Naive thymus-derived CD4-positive, alpha-beta T cell (primary cell): ENCODE measurements at regions of chr19 and their contacts with region 1.

Region 1: GRCh38 chr19:41859618-41860418 is at the start of gene RPS19:
- DNase-seq: peak; percentile 95 to 99 (median 98)
- ATAC-seq: peak; percentile 92
- H3K4me3 ChIP-seq: peak within 1 kb of the TSS; percentile 90
- H3K4me3 Mint-ChIP-seq: peak within 1 kb of the TSS; percentile 86 to 95 (median 93)
- H3K27ac ChIP-seq: peak within 1 kb of the TSS; percentile 89
- H3K27ac Mint-ChIP-seq: peak within 1 kb of the TSS; percentile 91 to 98 (median 95)
- H3K4me1 ChIP-seq: peaks cover 39 to 43% of the 10 kb centered on the region in 2 donors
- H3K4me1 Mint-ChIP-seq: peaks cover 34 to 47% (median 41%) of the 10 kb centered on the region in 7 donors
- H3K27me3 ChIP-seq: no peaks in the 10 kb centered on the region
- H3K27me3 Mint-ChIP-seq: peaks cover 0 to 9% (median 0%) of the 10 kb centered on the region in 5 donors
- total RNA-seq, gene RPS19: 2,739 to 3,712 (median 3,396) TPM

Region 2: GRCh38 chr19:41872775-41873647 is 13.2 kb after region 1 on chr19:
- CTCF ChIA-PET with region 1: interaction called, 38 read pairs
- POLR2A ChIA-PET with region 1: interaction called, 98 read pairs
- intact Hi-C with region 1: loop called (anchors 1 kb)
- DNase-seq: peak; percentile 58 to 72 (median 65)
- ATAC-seq: peak; percentile 20
- H3K4me3 ChIP-seq: no peak overlapping the region
- H3K4me3 Mint-ChIP-seq: peak overlapping the region; percentile 1 to 93 (median 67)
- H3K27ac ChIP-seq: peak overlapping the region; percentile 74
- H3K27ac Mint-ChIP-seq: peak overlapping the region; percentile 91 to 99 (median 99)
- H3K4me1 ChIP-seq: peaks cover 82 to 91% of the 10 kb centered on the region in 2 donors
- H3K4me1 Mint-ChIP-seq: peaks cover 45 to 93% (median 79%) of the 10 kb centered on the region in 7 donors
- H3K27me3 ChIP-seq: no peaks in the 10 kb centered on the region
- H3K27me3 Mint-ChIP-seq: no peaks in the 10 kb centered on the region

Region 3: GRCh38 chr19:41928221-41928683 is 68.4 kb after region 1 on chr19 and contains the start of gene ERFL:
- CTCF ChIA-PET with region 1: interaction called, 3 read pairs
- POLR2A ChIA-PET with region 1: interaction called, 7 read pairs
- intact Hi-C with region 1: loop called in 1 of 2 experiments (anchors 1 kb)
- DNase-seq: peak in 2 of 9 donors; percentile 32 to 53
- ATAC-seq: peak; percentile 50
- H3K4me3 ChIP-seq: peak within 1 kb of the TSS; percentile 93
- H3K4me3 Mint-ChIP-seq: peak within 1 kb of the TSS in 6 of 10 donors; percentile 88 to 99 (median 91)
- H3K27ac ChIP-seq: peak within 1 kb of the TSS; percentile 70
- H3K27ac Mint-ChIP-seq: peak within 1 kb of the TSS; percentile 75 to 96 (median 90)
- H3K4me1 ChIP-seq: peaks cover 17 to 18% of the 10 kb centered on the region in 2 donors
- H3K4me1 Mint-ChIP-seq: peaks cover 23 to 41% (median 29%) of the 10 kb centered on the region in 7 donors
- H3K27me3 ChIP-seq: no peaks in the 10 kb centered on the region
- H3K27me3 Mint-ChIP-seq: peaks cover 0 to 9% (median 3%) of the 10 kb centered on the region in 5 donors
- total RNA-seq, gene ERFL: 3.0 to 15.0 (median 8.0) TPM

Region 4: DNA sequence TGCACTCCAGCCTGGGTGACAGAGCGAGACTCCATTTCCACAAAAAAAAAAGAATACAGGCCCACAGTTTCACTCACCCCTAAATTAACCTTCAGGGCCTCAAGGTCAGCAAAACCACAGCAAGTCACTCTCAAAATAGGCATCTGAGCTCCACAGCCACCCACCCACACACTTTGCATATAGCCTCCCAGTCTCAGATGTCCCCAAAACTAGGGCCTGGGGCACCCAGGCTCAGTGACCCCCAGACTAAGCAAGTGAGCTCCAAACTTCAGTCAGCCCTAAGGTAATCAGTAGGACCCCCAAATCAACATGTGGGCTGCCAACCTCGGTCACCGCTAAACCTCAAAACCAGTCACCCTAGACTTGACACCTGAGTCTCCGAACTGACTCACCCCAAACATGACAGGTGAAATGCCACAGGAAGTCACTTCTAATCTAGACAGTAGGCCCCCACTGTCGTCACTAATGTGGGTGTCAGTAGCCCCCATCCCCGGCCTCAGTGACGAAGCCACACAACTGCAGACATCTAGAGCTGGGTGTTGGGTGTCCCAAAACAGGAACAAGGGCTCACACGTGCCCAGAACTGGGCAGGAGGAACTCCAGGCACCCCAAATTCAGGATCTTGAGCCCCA is 85.4 kb after region 1 on chr19:
- CTCF ChIA-PET with region 1: interaction called, 22 read pairs
- POLR2A ChIA-PET with region 1: interaction called, 19 read pairs
- intact Hi-C with region 1: no loop called
- DNase-seq: peak; percentile 45 to 90 (median 82)
- ATAC-seq: peak; percentile 96
- H3K4me3 ChIP-seq: no peak overlapping the region
- H3K4me3 Mint-ChIP-seq: peak overlapping the region in 9 of 10 donors; percentile 39 to 77 (median 60)
- H3K27ac ChIP-seq: peak overlapping the region; percentile 57
- H3K27ac Mint-ChIP-seq: peak overlapping the region; percentile 84 to 100 (median 96)
- H3K4me1 ChIP-seq: peaks cover 23 to 41% of the 10 kb centered on the region in 2 donors
- H3K4me1 Mint-ChIP-seq: peaks cover 27 to 50% (median 41%) of the 10 kb centered on the region in 7 donors
- H3K27me3 ChIP-seq: no peaks in the 10 kb centered on the region
- H3K27me3 Mint-ChIP-seq: peaks cover 0 to 16% (median 4%) of the 10 kb centered on the region in 5 donors

Region 5: GRCh38 chr19:41959056-41960053 is 99.5 kb after region 1 on chr19 and contains the start of gene RABAC1:
- CTCF ChIA-PET with region 1: interaction called, 6 read pairs
- POLR2A ChIA-PET with region 1: interaction called, 29 read pairs
- intact Hi-C with region 1: loop called (anchors 1 kb)
- DNase-seq: peak; percentile 67 to 91 (median 86)
- ATAC-seq: peak; percentile 95
- H3K4me3 ChIP-seq: peak within 1 kb of the TSS; percentile 78
- H3K4me3 Mint-ChIP-seq: peak within 1 kb of the TSS; percentile 80 to 99 (median 91)
- H3K27ac ChIP-seq: peak within 1 kb of the TSS; percentile 81
- H3K27ac Mint-ChIP-seq: peak within 1 kb of the TSS; percentile 74 to 94 (median 90)
- H3K4me1 ChIP-seq: peaks cover 8 to 9% of the 10 kb centered on the region in 2 donors
- H3K4me1 Mint-ChIP-seq: peaks cover 17 to 22% (median 18%) of the 10 kb centered on the region in 7 donors
- H3K27me3 ChIP-seq: no peaks in the 10 kb centered on the region
- H3K27me3 Mint-ChIP-seq: no peaks in the 10 kb centered on the region
- total RNA-seq, gene RABAC1: 70.4 to 90.9 (median 78.1) TPM

Region 6: DNA sequence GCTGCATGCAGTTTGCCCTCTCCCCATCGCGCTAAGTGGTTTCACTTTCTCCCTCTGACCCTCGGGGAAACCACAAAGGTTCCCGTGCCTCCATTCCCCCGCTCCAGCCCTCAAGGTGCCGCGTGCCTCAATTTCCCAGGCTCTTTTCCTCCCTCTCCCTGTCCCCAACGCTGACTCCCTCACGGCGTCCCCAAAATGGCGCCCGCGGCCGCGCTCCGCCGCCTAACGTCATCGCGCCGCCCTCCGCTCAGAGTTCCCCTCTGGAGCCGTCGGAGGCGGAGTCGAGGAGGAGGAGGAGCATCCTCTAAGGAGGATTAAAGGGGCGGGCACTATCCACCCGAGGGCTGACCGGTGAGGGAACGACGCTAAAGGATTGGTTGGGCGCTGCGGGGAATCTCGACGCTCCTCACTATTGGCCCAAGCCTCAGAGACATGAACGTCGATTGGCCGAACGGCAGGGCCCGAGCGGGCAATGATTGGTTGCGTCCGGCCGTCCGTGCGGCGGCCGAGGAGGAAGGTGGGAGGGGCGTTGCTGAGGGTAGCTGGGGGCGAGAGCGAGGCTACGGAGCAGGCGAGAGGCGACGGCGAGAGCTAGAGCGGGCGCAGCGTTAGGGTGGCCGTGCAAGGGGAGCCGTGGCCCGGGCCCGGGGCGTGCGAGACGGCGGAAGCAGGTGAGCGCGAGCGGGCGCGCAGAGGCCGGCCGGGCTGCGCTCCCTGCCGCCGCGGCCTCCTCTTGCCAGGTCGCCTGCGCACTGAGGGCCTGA is 216.0 kb after region 1 on chr19 and contains the start of gene ZNF574:
- CTCF ChIA-PET with region 1: no interaction called
- POLR2A ChIA-PET with region 1: no interaction called
- intact Hi-C with region 1: loop called (anchors 1 kb)
- DNase-seq: peak; percentile 91 to 99 (median 98)
- ATAC-seq: peak; percentile 98
- H3K4me3 ChIP-seq: peak within 1 kb of the TSS; percentile 70
- H3K4me3 Mint-ChIP-seq: peak within 1 kb of the TSS; percentile 92 to 100 (median 98)
- H3K27ac ChIP-seq: peak within 1 kb of the TSS; percentile 97
- H3K27ac Mint-ChIP-seq: peak within 1 kb of the TSS; percentile 99 to 100 (median 100)
- H3K4me1 ChIP-seq: peaks cover 19 to 24% of the 10 kb centered on the region in 2 donors
- H3K4me1 Mint-ChIP-seq: peaks cover 26 to 44% (median 38%) of the 10 kb centered on the region in 7 donors
- H3K27me3 ChIP-seq: no peaks in the 10 kb centered on the region
- H3K27me3 Mint-ChIP-seq: peaks cover 0 to 13% (median 0%) of the 10 kb centered on the region in 5 donors
- total RNA-seq, gene ZNF574: 17.6 to 26.7 (median 20.9) TPM

Region 7: DNA sequence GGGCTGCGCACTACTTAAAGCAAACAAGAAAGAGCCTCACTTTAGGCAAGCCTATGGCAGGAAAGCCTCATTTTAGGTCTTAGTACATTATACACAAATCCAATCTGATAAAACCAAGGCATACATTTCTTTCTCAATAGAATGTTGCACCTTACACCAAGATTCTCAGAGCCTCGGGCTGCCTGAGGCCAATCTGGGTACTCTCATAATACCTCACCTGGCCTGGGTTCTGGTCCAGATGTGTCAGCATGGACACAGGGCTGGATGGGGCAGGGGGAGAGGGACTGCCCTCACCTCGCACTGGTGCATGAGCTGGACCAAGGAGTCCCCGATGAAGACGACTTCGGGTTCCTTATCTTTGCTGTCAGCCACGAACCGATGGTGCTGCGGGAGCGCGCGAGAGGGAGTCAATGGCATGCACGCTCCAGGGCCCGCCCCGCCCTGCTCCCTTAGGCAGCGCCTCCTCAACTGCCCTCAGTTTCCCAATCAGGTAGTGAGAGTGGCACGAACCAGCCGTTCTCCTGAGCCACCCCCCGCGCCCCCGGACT is 441.9 kb after region 1 on chr19 and contains the start of gene PRR19:
- CTCF ChIA-PET with region 1: no interaction called
- POLR2A ChIA-PET with region 1: no interaction called
- intact Hi-C with region 1: loop called in 1 of 2 experiments (anchors 1 kb)
- DNase-seq: peak in 1 of 9 donors; percentile 21
- ATAC-seq: peak; percentile 8
- H3K4me3 ChIP-seq: peak within 1 kb of the TSS; percentile 85
- H3K4me3 Mint-ChIP-seq: peak within 1 kb of the TSS; percentile 83 to 92 (median 89)
- H3K27ac ChIP-seq: peak within 1 kb of the TSS; percentile 71
- H3K27ac Mint-ChIP-seq: peak within 1 kb of the TSS; percentile 64 to 94 (median 88)
- H3K4me1 ChIP-seq: peaks cover 11 to 16% of the 10 kb centered on the region in 2 donors
- H3K4me1 Mint-ChIP-seq: peaks cover 11 to 30% (median 23%) of the 10 kb centered on the region in 7 donors
- H3K27me3 ChIP-seq: no peaks in the 10 kb centered on the region
- H3K27me3 Mint-ChIP-seq: no peaks in the 10 kb centered on the region
- total RNA-seq, gene PRR19: 0.32 to 0.68 (median 0.38) TPM in 4 of 5 experiments, not detected in the other